HCT116 (cell line): ENCODE measurements at regions of chr20 and their contacts with region 1.

Region 1: DNA sequence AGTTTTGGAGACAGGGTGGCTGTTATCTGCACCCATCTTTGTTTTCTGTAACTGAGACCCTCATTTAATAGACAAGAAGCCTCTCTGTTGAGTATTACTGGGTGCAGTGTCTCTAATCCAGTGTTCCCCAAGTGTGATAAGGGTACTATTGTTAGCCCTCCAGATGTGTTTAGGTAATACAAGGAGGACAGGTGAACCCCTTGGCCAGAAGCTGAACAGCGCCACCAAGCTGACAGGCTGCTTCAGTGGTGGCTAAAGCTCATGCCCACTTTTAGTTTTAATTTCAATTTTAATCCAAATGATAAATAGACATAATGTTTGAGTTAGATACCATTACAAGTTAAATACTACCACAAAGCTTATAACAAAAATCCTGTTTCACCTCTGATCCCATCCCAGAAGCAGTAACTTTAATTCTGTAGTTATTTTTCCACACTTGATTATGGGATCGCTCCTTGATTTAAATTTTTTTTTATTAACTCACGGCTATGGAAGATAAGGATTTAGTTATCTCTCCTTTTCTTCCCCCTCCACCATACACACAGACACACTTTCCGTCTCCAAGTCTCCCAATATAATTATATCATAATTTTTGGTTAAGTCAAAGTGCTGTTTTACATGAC is 8.4 kb upstream of the STK35 start:
- DNase-seq: peak; percentile 46
- ATAC-seq: peak; percentile 97
- H3K4me3 ChIP-seq: no peak overlapping the region
- H3K27ac ChIP-seq: no peak overlapping the region
- H3K4me1 ChIP-seq: no peaks in the 10 kb centered on the region
- H3K27me3 ChIP-seq: peaks cover 37% of the 10 kb centered on the region
- CTCF ChIP-seq: peak; percentile 74 to 95 (median 94)
- POLR2A ChIP-seq: no peak
- RAD21 ChIP-seq: peak; percentile 81

Region 2: GRCh38 chr20:1764136-1765033 is 328.9 kb before region 1 on chr20:
- CTCF ChIA-PET with region 1: interaction called, 3 read pairs
- POLR2A ChIA-PET with region 1: no interaction called
- RAD21 ChIA-PET with region 1: no interaction called
- intact Hi-C with region 1: loop called (anchors 1 kb)
- DNase-seq: peak; percentile 78
- ATAC-seq: peak; percentile 97
- H3K4me3 ChIP-seq: no peak overlapping the region
- H3K27ac ChIP-seq: no peak overlapping the region
- H3K4me1 ChIP-seq: peaks cover 0 to 19% of the 10 kb centered on the region in 2 experiments; a peak in 2 of 4 replicates
- H3K27me3 ChIP-seq: no peaks in the 10 kb centered on the region
- CTCF ChIP-seq: peak; percentile 63 to 89 (median 79); a peak in 5 of 6 replicates
- POLR2A ChIP-seq: no peak
- RAD21 ChIP-seq: peak; percentile 79

Region 3: GRCh38 chr20:1802385-1803060 is 290.7 kb before region 1 on chr20:
- CTCF ChIA-PET with region 1: interaction called, 11 read pairs
- POLR2A ChIA-PET with region 1: no interaction called
- RAD21 ChIA-PET with region 1: no interaction called
- intact Hi-C with region 1: no loop called
- DNase-seq: no peak
- ATAC-seq: peak; percentile 91
- H3K4me3 ChIP-seq: peak overlapping the region; percentile 10 to 18; a peak in 2 of 4 replicates
- H3K27ac ChIP-seq: no peak overlapping the region
- H3K4me1 ChIP-seq: peaks cover 0 to 12% of the 10 kb centered on the region in 2 experiments; a peak in 3 of 4 replicates
- H3K27me3 ChIP-seq: no peaks in the 10 kb centered on the region
- CTCF ChIP-seq: peak; percentile 49 to 67 (median 53); a peak in 5 of 6 replicates
- POLR2A ChIP-seq: no peak
- RAD21 ChIP-seq: peak; percentile 77

Region 4: GRCh38 chr20:1965520-1966351 is 127.5 kb before region 1 on chr20:
- CTCF ChIA-PET with region 1: interaction called, 8 read pairs
- POLR2A ChIA-PET with region 1: no interaction called
- RAD21 ChIA-PET with region 1: no interaction called
- intact Hi-C with region 1: loop called (anchors 1 kb)
- DNase-seq: peak; percentile 62
- ATAC-seq: peak; percentile 97
- H3K4me3 ChIP-seq: no peak overlapping the region
- H3K27ac ChIP-seq: no peak overlapping the region
- H3K4me1 ChIP-seq: peaks cover 0 to 6% of the 10 kb centered on the region in 2 experiments; a peak in 2 of 4 replicates
- H3K27me3 ChIP-seq: no peaks in the 10 kb centered on the region; the same call in 1 of the 2 replicates
- CTCF ChIP-seq: peak; percentile 88 to 96 (median 92)
- POLR2A ChIP-seq: no peak
- RAD21 ChIP-seq: peak; percentile 90

Region 5: GRCh38 chr20:2005831-2006426 is 87.3 kb before region 1 on chr20:
- CTCF ChIA-PET with region 1: interaction called, 18 read pairs
- POLR2A ChIA-PET with region 1: no interaction called
- RAD21 ChIA-PET with region 1: no interaction called
- intact Hi-C with region 1: loop called (anchors 1 kb)
- DNase-seq: peak; percentile 15
- ATAC-seq: no peak
- H3K4me3 ChIP-seq: no peak overlapping the region
- H3K27ac ChIP-seq: no peak overlapping the region
- H3K4me1 ChIP-seq: no peaks in the 10 kb centered on the region
- H3K27me3 ChIP-seq: peaks cover 69% of the 10 kb centered on the region
- CTCF ChIP-seq: no peak
- POLR2A ChIP-seq: no peak
- RAD21 ChIP-seq: no peak

Region 6: DNA sequence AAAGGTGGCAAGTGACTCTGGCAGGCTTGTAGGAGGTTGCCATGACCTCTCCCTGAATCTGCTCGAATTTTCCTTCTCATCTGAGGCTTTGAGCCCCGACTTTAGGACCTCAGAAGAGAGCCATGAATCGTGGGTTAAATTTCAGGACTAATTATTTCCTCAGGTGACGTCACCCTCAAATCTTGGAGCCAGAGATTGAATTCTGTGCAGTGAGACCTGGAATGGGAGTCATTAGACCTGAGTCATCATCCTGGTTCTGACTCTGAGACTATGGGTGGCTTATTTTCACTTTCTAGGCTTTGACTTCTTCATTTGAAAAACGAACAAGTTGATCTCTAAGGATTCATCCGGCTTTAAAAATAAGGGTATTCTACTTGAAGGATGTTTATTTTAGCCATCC is 50.9 kb before region 1 on chr20:
- CTCF ChIA-PET with region 1: no interaction called
- POLR2A ChIA-PET with region 1: no interaction called
- RAD21 ChIA-PET with region 1: no interaction called
- intact Hi-C with region 1: no loop called
- DNase-seq: no peak
- ATAC-seq: no peak
- H3K4me3 ChIP-seq: no peak overlapping the region
- H3K27ac ChIP-seq: no peak overlapping the region
- H3K4me1 ChIP-seq: no peaks in the 10 kb centered on the region
- H3K27me3 ChIP-seq: peaks cover 89% of the 10 kb centered on the region
- CTCF ChIP-seq: no peak
- POLR2A ChIP-seq: no peak
- RAD21 ChIP-seq: no peak